Panc1 (cell line): ENCODE measurements at regions of chrX and their contacts with region 1.

Region 1: DNA sequence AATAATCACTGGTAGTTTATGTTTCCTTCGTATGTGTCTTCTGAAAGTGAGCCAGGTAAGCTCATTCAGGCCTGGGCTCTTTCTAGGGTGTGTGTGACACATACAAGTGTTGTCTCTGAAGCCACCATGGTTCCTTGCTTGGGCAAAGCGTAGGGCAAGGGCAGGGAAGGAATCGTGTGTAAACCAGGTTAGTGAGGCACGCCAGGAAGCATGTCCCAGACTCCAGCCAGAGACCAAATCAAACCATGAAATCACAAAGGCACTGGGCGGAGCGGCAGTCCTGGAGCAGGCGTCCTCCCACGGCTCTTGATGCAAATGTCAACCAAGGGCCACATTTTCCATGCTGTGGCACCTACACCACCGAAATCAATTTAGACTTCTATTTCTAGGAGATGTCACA is 67.0 kb downstream of the NYX start:
- DNase-seq: no peak
- ATAC-seq: no peak
- H3K4me3 ChIP-seq: no peak overlapping the region
- H3K27ac ChIP-seq: no peak overlapping the region
- H3K4me1 ChIP-seq: no peaks in the 10 kb centered on the region
- H3K27me3 ChIP-seq: no peaks in the 10 kb centered on the region
- CTCF ChIP-seq: no peak

Region 2: DNA sequence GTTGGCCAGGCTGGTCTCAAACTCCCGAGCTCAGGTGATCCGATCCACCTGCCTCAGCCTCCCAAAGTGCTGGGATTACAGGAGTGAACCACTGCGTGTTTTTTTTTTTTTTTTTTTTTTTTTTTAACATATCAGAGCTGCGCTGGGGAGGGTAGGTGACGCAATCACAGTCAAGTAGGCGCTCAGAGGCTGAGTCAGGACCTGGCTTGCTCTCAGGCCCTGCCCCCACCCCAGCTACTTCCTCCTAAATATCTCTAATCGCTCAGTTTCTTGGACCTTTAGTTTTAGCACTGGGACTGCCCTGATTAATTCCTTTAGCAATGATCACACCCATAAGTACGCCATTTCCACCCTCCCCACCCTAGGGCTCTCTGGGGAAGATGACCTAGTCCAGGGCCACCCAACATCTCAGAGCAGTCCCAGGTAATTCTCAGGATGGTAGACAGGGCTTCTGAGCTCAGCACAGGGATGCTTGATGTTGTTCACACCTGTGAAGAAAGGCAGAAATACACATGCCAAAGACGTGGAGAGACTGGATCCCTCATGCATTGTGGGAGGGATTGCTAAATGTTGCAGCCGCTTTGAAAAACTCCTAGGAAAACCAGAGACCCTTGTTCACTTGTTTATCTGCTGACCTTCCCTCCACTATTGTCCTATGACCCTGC is 130.0 kb before region 1 on chrX:
- CTCF ChIA-PET with region 1: no interaction called
- POLR2A ChIA-PET with region 1: interaction called, 10 read pairs
- in situ Hi-C with region 1: no loop called
- intact Hi-C with region 1: no loop called
- DNase-seq: no peak
- ATAC-seq: no peak
- H3K4me3 ChIP-seq: no peak overlapping the region
- H3K27ac ChIP-seq: no peak overlapping the region; the same call in 1 of the 2 replicates
- H3K4me1 ChIP-seq: peaks cover 4% of the 10 kb centered on the region
- H3K27me3 ChIP-seq: no peaks in the 10 kb centered on the region
- CTCF ChIP-seq: no peak

Region 3: GRCh38 chrX:41720125-41720779 is 206.1 kb after region 1 on chrX:
- CTCF ChIA-PET with region 1: no interaction called
- POLR2A ChIA-PET with region 1: no interaction called
- in situ Hi-C with region 1: no loop called
- intact Hi-C with region 1: no loop called
- DNase-seq: no peak
- ATAC-seq: no peak
- H3K4me3 ChIP-seq: no peak overlapping the region
- H3K27ac ChIP-seq: no peak overlapping the region
- H3K4me1 ChIP-seq: no peaks in the 10 kb centered on the region
- H3K27me3 ChIP-seq: no peaks in the 10 kb centered on the region
- CTCF ChIP-seq: no peak

Region 4: GRCh38 chrX:41858161-41858775 is 344.1 kb after region 1 on chrX:
- CTCF ChIA-PET with region 1: no interaction called
- POLR2A ChIA-PET with region 1: no interaction called
- in situ Hi-C with region 1: no loop called
- intact Hi-C with region 1: no loop called
- DNase-seq: no peak
- ATAC-seq: no peak
- H3K4me3 ChIP-seq: no peak overlapping the region
- H3K27ac ChIP-seq: no peak overlapping the region
- H3K4me1 ChIP-seq: no peaks in the 10 kb centered on the region
- H3K27me3 ChIP-seq: no peaks in the 10 kb centered on the region
- CTCF ChIP-seq: no peak